ENCODE measurements at regions of chr4 and their contacts with region 1.

Region 1: DNA sequence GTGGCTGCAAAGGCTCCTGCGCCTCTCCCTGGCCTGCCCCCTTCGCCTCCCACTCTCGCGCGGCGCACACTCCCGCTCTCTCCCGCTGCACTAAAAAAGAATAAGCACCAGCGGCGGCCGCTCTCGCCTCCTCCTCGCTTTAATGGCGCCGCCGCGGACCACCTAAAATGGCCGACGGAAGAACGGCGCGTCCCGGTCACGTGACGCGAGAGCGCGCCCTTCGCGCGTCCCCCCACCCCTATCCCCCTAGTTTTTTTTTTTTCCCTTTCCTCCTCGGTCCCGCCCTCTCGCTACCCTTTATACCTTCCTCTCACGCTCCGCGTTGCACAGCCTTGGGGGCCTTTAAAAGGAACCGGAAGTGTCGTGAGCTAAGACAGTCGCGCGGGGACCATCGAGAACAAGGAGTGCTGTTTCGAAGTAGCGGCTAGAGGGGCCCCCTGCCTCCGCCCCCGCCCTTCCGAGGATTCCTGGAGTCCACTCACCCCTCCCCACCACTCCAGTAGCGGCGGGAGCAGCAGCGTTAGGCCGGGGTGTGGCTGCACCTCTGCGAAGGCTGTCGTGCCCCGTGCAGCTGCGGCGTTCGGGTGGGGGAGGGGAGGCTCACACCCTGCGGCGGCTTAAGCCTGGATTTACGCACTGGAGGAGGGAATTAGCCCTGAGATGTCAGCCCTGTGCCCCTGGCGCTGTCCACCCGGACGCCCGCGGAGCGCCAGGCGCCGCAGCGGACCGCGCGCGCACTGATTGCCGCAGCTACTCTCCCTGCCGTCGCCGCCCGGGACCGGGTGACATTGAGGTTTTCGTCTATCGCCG is at the start of gene HNRNPD:
- DNase-seq: peak; percentile 91 to 98 (median 97)
- H3K4me3 ChIP-seq: peak within 1 kb of the TSS; percentile 65 to 99 (median 93)
- H3K27ac ChIP-seq: peak within 1 kb of the TSS; percentile 91 to 100 (median 98)
- H3K27me3 ChIP-seq: no peaks in the 10 kb centered on the region
- CTCF ChIP-seq: peak in 37 of 56 donors; percentile 5 to 63 (median 25)
- total RNA-seq, gene HNRNPD: 81.5 to 203 (median 140) TPM

Region 2: DNA sequence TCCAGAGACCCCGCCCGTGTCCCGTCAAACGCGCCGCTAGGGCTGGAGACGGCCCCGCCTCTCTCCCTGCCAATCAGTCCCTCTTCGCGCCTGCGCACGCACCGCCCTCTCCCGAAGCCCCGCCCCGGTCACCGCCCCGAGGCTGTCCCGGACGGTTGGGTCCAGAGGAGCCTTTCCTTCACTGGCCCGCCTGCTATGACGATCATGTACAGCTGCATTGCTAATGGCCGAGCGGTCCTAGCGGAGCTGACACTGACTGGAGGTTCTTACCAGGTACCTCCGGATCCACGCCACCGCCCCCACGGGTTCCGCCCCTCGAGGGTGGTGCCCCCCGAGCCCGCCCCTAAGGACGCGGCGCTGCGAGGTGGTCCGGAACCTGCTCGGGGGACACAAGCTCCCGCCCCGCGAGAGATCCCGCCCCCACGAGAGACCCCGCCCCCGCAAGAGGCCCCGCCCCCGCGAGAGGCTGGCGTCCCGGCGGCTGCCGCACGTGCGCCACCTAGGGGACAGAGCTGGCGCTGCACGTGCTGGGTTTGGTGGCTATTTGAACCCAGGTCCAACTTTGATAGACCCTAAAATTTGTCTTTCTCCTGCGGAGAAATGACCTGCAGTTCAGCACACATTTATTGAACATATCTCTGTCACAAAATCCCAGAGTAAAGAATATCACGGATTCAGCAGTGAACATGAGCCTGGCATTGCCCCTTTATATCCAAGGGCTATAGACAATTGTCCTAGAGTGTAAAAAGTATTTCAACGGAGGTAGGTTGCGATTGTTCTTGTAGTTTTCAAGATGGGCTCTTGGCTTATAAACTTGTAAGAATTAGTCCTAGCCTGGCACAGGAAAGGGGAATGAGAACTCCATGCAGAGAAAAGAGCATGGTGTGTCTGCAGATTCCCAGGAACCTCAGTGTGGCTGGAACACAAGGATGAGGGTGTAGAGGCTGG is 88.9 kb before region 1 on chr4:
- intact Hi-C with region 1: loop called (anchors 1 to 2 kb)
- DNase-seq: peak; percentile 89 to 100 (median 99)
- H3K4me3 ChIP-seq: peak overlapping the region; percentile 42 to 77 (median 65)
- H3K27ac ChIP-seq: peak overlapping the region in 51 of 59 donors; percentile 1 to 89 (median 73)
- H3K27me3 ChIP-seq: no peaks in the 10 kb centered on the region
- CTCF ChIP-seq: peak; percentile 66 to 95 (median 87)

Region 3: DNA sequence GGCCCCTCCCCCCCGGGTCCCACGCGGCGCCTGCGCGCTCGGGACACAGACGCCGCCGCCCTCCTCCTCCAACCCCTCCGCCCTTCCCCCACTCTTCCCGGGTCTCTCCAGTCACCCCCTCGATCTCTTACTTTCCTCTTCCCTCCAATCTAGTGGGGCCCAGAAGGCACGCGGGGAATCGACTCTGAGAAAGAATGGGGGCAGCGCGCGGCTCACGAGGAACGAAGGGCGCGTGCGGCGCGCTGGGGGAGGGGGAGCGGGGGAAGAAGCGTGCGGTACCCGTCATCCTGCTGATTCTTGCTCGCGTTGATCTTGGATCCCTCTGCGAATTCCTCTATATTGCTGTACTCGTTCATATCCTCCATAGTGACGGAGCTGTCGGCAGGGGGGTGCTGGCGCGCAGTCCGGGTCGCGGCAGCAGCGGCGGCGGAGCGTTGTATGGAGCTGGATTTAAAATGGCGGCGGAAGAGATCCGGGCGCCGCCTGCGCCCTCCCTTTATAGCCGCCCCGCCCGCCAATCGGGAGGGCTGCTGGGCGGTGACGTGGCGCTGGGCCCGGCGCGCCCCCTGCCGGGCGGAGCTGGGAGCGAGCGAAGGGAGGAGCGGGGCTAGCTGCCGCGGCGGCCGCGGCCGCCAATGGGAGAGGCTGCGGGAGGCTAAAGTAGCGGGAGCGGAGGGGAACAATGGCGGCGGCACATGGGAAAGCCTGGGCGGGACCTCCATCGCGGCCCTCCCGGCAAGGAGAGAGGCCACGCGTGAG is 55.1 kb after region 1 on chr4:
- intact Hi-C with region 1: loop called (anchors 1 kb)
- DNase-seq: peak; percentile 77 to 94 (median 90)
- H3K4me3 ChIP-seq: peak overlapping the region; percentile 62 to 98 (median 92)
- H3K27ac ChIP-seq: peak overlapping the region; percentile 90 to 100 (median 98)
- H3K27me3 ChIP-seq: no peaks in the 10 kb centered on the region
- CTCF ChIP-seq: peak; percentile 67 to 99 (median 88)

Region 4: DNA sequence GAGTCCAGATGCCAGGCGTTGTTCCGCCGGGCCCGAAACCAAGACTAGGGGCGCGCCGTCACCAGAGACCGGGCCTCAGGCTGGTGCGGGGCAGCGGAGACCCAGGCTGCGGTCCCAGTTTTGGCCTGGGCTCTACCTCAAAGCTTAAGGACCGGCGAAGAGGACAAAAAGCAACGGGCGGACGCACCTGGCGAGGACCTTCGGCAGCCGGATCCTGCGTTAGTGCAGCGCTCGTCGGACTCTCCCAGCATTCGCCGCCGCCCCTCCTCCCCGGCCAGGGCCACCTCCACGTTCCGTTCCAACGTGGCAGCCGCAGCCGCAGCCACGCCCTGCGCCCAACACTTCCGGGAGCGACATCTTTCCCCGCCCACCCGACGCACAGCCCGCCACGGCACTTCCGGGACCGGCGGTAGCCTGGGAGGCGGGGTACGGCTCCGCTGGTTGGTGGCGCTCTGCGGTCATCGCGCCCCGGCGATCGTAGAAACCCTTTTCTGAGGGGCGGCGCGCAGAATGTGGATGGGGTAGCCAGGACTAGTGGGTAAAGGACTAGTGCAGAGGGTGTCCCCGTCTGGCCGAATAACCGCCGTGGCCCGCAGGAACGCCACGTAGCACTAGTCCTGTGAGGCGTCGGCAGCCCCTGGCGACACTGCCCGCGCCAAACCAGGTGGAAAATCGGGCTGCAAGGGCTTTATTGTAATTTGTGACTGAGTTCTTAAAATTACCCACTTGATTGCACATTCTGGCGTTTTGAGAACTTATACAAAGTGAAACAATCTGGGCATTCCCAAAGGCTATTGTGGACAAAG is 517.1 kb after region 1 on chr4 and contains the start of gene SEC31A:
- intact Hi-C with region 1: loop called (anchors 10 kb)
- DNase-seq: peak; percentile 88 to 96 (median 92)
- H3K4me3 ChIP-seq: peak within 1 kb of the TSS; percentile 58 to 100 (median 91)
- H3K27ac ChIP-seq: peak within 1 kb of the TSS; percentile 62 to 99 (median 93)
- H3K27me3 ChIP-seq: no peaks in the 10 kb centered on the region
- CTCF ChIP-seq: peak in 50 of 56 donors; percentile 13 to 74 (median 44)
- total RNA-seq, gene SEC31A: 85.5 to 171 (median 130) TPM